ENCODE measurements at regions of chr20 and their contacts with region 1.

Region 1: DNA sequence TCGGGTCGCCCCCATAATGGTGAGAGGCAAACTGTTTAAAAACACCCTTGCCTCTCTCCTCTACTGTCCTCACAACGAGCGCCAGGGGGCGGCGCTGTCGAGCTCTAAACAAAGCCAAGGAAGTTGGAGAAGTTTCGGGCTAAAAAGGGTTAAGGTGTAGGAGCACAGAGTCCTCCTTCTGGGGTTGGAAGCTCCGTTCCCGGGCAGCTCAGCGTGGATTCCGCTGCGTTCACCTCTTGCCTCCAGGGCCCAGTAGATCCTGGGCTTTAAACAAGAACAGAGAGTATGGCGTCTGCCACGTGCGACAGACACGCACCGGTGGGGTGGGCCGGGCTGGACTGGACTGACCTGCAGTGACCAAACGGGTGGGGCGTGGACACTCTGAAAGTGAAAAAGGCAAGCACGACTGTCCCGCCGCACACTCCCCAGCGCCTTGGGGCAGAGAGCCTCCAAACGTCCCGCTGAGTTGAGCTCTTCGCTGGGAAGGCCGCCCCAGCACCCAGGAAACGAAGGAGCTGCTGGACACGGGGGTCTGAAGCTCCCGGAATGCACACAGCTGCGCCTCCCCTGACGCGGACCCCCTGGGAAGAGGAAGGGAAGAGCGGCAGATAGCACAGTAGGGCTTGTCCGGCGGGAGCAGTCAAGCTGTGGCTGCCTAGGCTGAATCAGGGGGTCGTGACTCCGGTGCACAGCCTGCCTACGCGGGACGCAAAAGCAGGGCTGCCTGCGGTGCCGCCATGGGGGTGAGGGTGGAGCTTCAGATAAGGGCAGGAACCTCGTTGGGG is 1.6 kb upstream of the THBD start:
- DNase-seq: peak; percentile 94
- H3K4me3 ChIP-seq: peak overlapping the region; percentile 15 to 62 (median 50)
- H3K27ac ChIP-seq: peak overlapping the region; percentile 62
- H3K4me1 ChIP-seq: peaks cover 16% of the 10 kb centered on the region
- H3K27me3 ChIP-seq: no peaks in the 10 kb centered on the region
- CTCF ChIP-seq: peak; percentile 82 to 85
- POLR2A ChIP-seq: peak; percentile 44

Region 2: DNA sequence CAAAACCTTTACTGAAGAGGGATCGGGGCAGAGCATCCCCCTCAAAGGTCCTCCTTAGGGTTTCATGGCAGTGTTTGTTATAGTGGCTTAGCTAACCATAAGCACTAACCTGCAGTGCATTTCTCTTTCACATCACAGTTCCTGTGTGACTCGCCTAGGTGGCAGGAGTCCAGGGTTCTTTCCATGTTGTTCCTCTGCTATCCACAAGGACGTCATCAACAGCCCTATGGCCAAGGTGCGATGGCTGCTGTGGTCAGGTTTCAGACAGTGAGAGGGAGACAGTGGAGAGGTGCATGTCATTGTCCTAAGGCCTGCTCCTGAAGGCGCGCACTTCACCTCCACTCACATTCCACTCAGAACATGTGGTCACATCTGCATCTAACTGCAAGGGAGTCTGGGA is 427.8 kb before region 1 on chr20:
- CTCF ChIA-PET with region 1: no interaction called
- POLR2A ChIA-PET with region 1: no interaction called
- dilution Hi-C with region 1: no loop called
- intact Hi-C with region 1: no loop called
- DNase-seq: peak; percentile 2
- H3K4me3 ChIP-seq: no peak overlapping the region
- H3K27ac ChIP-seq: no peak overlapping the region
- H3K4me1 ChIP-seq: no peaks in the 10 kb centered on the region
- H3K27me3 ChIP-seq: no peaks in the 10 kb centered on the region
- CTCF ChIP-seq: no peak
- POLR2A ChIP-seq: no peak

Region 3: DNA sequence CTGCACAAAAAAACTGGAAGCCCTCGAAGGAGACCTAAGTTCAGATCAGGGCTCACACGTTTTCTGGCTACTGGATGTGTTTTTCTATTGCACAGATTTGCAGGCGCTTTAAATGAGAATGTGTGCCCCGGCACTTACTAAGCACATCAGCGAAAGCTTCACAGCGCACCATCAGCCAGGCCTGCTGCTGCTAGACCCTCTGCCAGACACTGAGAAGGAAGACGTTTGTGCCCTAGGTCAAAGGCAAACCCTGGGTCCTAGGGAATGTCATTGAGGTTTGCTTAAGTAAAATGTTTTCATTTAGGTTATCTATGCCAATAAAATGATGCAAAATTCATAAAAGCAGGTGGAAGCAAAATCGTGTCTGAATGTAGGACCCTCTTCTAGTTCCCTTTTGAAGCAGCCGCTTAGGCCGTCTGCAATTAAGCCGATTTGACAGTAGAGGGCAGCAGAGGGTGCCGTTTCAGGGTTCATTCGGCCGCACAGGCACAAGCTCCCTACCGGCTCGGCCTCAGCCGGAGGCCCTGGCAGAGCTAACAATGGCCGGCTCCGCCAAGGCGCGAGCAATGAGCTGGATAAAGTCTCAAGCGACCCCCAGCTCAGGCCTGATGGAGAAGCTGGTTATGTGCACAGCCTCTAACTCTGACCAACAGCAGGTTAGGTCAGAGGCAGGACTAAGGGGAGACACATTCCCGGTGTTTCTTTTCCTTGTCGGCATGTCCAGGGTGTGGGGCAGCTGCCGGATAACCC is 359.5 kb before region 1 on chr20:
- CTCF ChIA-PET with region 1: interaction called, 108 read pairs
- POLR2A ChIA-PET with region 1: no interaction called
- dilution Hi-C with region 1: loop called (anchors 10 kb)
- intact Hi-C with region 1: loop called (anchors 1 kb)
- DNase-seq: peak; percentile 82
- H3K4me3 ChIP-seq: peak overlapping the region in 1 of 3 experiments; percentile 4
- H3K27ac ChIP-seq: no peak overlapping the region
- H3K4me1 ChIP-seq: peaks cover 6% of the 10 kb centered on the region
- H3K27me3 ChIP-seq: no peaks in the 10 kb centered on the region
- CTCF ChIP-seq: peak; percentile 83 to 87
- POLR2A ChIP-seq: no peak

Region 4: DNA sequence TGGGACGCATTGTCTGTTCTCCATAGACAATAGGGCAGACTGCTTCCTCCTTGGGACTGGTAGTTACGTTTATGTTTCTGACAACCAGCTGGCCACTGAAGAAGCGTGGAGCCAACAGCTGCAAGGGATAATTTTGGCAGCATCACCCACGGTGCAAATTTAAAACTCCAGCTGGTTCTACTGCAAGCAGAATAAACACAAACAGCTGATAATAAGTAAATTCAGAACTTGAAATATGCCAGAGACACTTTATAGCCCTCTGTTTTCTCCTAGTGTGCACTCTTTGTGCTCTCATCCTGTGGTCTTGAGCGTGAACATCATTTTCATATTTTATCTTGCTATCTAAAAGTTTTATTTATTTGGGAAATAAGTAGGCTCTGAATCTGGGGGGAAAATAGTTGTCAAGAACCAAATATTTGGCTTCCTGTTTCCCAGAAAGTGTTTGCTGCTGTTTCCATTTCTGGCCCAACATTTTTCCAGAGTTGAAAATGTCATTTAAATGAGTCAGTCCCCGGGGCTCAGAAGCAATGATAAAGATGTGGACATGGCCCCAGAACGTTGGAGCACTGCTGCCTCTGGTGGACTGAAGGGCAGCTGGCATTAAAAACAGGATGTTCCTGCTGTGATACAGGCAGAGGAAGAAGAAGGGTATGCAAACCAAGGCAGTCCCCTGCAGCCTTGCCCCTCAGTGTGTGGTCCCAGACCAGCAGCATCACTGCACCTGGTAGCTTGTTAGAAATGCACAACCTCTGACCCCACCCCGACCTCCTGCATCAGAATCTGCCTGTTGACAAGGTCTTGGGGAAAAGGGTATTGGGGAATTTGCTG is 10.9 kb after region 1 on chr20:
- CTCF ChIA-PET with region 1: interaction called, 51 read pairs
- POLR2A ChIA-PET with region 1: interaction called, 7 read pairs
- dilution Hi-C with region 1: no loop called
- intact Hi-C with region 1: loop called (anchors 1 kb)
- DNase-seq: peak; percentile 92
- H3K4me3 ChIP-seq: no peak overlapping the region
- H3K27ac ChIP-seq: peak overlapping the region; percentile 74
- H3K4me1 ChIP-seq: peaks cover 29% of the 10 kb centered on the region
- H3K27me3 ChIP-seq: no peaks in the 10 kb centered on the region
- CTCF ChIP-seq: peak; percentile 57 to 69
- POLR2A ChIP-seq: no peak

Region 5: DNA sequence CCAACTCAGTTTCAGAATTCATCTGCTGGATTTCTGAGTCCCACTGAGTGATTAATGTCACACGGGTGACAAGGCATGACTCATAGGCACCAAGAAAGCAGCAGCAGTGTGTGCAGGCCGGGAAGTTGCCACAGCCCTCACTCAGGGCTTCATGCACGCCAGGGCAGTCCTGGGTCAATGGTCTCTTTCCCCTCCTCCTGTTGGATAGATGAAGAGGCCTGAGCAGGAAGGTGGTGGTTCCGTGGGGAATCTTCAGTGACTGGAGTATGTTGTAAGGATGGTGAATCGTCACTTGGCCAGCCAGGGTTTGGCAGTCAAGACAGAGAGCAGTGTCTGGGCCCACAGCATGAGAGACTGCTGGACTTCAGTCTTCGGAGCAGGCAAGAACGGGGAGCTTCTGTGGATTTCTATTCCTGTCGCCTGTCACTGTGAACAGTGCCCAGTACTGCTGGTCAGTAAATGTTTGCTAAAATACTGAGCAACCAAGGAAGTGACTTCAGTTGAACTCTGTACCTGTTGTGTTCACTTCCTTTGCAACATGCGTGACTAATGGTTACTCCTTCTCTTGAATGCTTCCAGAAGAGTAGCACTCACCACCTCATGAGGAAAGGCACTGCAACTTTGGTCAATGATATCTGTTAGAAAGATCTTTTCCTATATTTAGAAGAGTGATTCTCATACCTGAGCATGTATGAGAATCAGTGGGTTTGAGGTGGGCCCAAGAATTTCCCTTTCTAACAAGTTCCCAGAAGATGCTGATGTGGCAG is 97.1 kb after region 1 on chr20:
- CTCF ChIA-PET with region 1: interaction called, 23 read pairs
- POLR2A ChIA-PET with region 1: no interaction called
- dilution Hi-C with region 1: no loop called
- intact Hi-C with region 1: no loop called
- DNase-seq: peak; percentile 84
- H3K4me3 ChIP-seq: no peak overlapping the region
- H3K27ac ChIP-seq: peak overlapping the region; percentile 88
- H3K4me1 ChIP-seq: peaks cover 85% of the 10 kb centered on the region
- H3K27me3 ChIP-seq: no peaks in the 10 kb centered on the region
- CTCF ChIP-seq: no peak
- POLR2A ChIP-seq: no peak

Region 6: GRCh38 chr20:23225407-23226072 is 174.5 kb after region 1 on chr20:
- CTCF ChIA-PET with region 1: interaction called, 20 read pairs
- POLR2A ChIA-PET with region 1: no interaction called
- dilution Hi-C with region 1: no loop called
- intact Hi-C with region 1: no loop called
- DNase-seq: no peak
- H3K4me3 ChIP-seq: no peak overlapping the region
- H3K27ac ChIP-seq: no peak overlapping the region
- H3K4me1 ChIP-seq: peaks cover 3% of the 10 kb centered on the region
- H3K27me3 ChIP-seq: no peaks in the 10 kb centered on the region
- CTCF ChIP-seq: no peak
- POLR2A ChIP-seq: no peak

Region 7: GRCh38 chr20:23320317-23320716 is 269.3 kb after region 1 on chr20:
- CTCF ChIA-PET with region 1: interaction called, 17 read pairs
- POLR2A ChIA-PET with region 1: no interaction called
- dilution Hi-C with region 1: no loop called
- intact Hi-C with region 1: loop called (anchors 1 kb)
- DNase-seq: peak; percentile 21
- H3K4me3 ChIP-seq: no peak overlapping the region
- H3K27ac ChIP-seq: no peak overlapping the region
- H3K4me1 ChIP-seq: peaks cover 10% of the 10 kb centered on the region
- H3K27me3 ChIP-seq: peaks cover 0 to 5% of the 10 kb centered on the region in 2 experiments
- CTCF ChIP-seq: peak; percentile 37 to 50
- POLR2A ChIP-seq: no peak

Measured in endothelial cell of umbilical vein (primary cell).